Mammary epithelial cell (primary cell): ENCODE measurements at regions of chr2 and their contacts with region 1.

Region 1: GRCh38 chr2:72325592-72326422 is 178.1 kb upstream of the CYP26B1 start:
- DNase-seq: no peak
- H3K4me3 ChIP-seq: no peak overlapping the region
- H3K27ac ChIP-seq: no peak overlapping the region
- H3K4me1 ChIP-seq: no peaks in the 10 kb centered on the region
- H3K27me3 ChIP-seq: no peaks in the 10 kb centered on the region
- CTCF ChIP-seq: peak; percentile 75 to 80

Region 2: GRCh38 chr2:72041638-72042111 is 284.1 kb before region 1 on chr2:
- CTCF ChIA-PET with region 1: no interaction called
- dilution Hi-C with region 1: no loop called
- in situ Hi-C with region 1: no loop called
- intact Hi-C with region 1: no loop called
- DNase-seq: peak; percentile 86
- H3K4me3 ChIP-seq: no peak overlapping the region
- H3K27ac ChIP-seq: peak overlapping the region; percentile 47
- H3K4me1 ChIP-seq: peaks cover 32% of the 10 kb centered on the region
- H3K27me3 ChIP-seq: no peaks in the 10 kb centered on the region
- CTCF ChIP-seq: no peak

Region 3: DNA sequence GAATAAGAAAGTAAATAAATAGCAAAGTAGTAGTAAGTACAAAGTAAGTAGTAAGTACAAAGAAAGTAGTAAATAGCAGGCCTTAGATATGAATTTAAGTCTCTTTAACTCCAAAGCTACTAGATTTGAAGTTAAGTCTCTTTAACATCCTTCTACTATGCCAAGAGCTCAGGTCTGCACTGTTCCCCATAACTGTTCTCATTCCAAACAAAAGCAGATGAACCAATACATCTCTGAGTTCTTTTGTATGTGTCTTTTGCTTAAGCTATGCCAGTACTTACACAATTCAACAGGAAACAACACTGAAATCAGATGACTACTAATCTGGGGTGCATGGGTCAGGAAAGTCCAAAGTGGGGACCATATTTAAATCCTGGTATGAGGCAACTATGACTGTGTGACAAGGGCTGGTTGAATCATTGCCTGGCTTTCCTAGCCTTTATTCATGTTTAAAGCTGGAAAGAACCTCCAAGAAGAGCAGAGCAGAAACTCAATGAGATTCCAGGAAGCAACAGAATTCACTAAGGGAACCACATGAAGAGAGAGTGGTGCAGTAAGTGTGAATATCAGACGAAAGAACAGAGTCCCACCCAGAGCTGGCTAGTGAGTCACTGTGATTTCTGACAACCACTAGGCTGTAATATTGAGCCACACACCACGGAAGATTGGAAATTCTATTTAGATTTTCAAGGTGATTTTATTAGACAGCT is 127.1 kb before region 1 on chr2:
- CTCF ChIA-PET with region 1: no interaction called
- dilution Hi-C with region 1: no loop called
- in situ Hi-C with region 1: no loop called
- intact Hi-C with region 1: loop called (anchors 10 kb)
- DNase-seq: peak; percentile 79
- H3K4me3 ChIP-seq: no peak overlapping the region
- H3K27ac ChIP-seq: no peak overlapping the region
- H3K4me1 ChIP-seq: peaks cover 11% of the 10 kb centered on the region
- H3K27me3 ChIP-seq: no peaks in the 10 kb centered on the region
- CTCF ChIP-seq: peak; percentile 18 to 45

Region 4: DNA sequence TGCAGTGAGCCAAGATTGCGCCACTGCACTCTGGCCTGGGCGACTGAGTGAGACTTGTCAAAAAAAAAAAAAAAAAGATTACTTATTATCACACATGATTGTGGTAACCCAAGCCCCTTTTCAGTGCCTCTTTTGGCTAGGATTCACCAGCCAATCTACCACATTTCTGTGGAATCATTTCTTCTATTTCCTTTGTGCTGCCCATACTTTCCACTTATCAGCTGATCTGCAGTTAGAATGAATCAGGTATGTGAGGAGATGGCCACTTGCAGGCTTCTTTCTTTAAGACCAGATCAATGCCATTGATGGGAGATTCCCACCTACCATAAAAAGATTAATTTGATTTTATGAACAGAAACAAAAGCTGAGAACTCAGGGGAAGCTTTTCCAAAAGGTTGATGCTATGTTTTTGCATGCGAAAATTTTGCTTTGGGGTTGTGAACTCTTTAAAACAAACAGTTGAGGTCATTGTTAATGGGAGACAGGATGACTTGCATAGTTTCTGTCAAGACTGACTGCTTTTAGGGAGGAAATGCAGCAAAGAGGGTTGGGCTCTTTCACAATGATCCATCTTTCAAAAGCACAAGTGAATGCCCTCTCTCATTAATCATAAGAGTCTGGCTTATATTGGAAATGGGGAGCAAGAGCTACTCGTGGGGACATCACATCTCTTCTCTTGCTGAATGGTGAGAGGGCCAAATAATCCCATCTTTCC is 111.2 kb before region 1 on chr2:
- CTCF ChIA-PET with region 1: no interaction called
- dilution Hi-C with region 1: no loop called
- in situ Hi-C with region 1: no loop called
- intact Hi-C with region 1: loop called (anchors 5 kb)
- DNase-seq: peak; percentile 48
- H3K4me3 ChIP-seq: no peak overlapping the region
- H3K27ac ChIP-seq: no peak overlapping the region
- H3K4me1 ChIP-seq: peaks cover 6% of the 10 kb centered on the region
- H3K27me3 ChIP-seq: no peaks in the 10 kb centered on the region
- CTCF ChIP-seq: no peak

Region 5: GRCh38 chr2:72367530-72368225 is 41.9 kb after region 1 on chr2:
- CTCF ChIA-PET with region 1: no interaction called
- dilution Hi-C with region 1: no loop called
- in situ Hi-C with region 1: no loop called
- intact Hi-C with region 1: loop called (anchors 1 kb)
- DNase-seq: peak; percentile 98
- H3K4me3 ChIP-seq: no peak overlapping the region
- H3K27ac ChIP-seq: no peak overlapping the region
- H3K4me1 ChIP-seq: peaks cover 6% of the 10 kb centered on the region
- H3K27me3 ChIP-seq: no peaks in the 10 kb centered on the region
- CTCF ChIP-seq: peak; percentile 64 to 84

Region 6: DNA sequence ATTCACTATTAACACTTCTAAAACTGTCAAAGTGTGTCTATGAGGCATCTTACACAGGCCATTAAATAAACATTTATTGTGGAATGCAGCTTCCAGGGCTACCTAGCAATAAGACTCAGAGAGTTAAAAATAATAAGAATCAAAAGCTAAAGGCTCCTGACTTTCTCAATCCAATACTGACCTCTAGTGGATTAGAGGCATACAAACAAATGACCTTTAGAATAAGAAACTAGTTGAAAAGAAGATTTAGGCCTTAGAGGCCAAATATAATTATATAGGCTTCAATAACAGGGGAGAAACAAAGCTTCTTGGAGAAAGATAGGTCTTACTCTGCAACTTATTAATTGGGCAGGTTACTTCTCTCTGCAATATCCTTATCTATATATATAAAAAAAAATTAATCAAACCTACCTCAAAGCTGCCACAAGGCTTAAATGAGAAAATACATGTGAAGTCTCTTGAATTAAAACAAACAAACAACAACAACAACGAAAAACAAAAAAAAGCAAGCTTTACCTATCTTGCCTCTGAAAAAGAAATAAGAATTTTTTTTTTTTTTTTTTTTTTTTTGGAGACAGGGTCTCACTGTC is 253.9 kb after region 1 on chr2:
- CTCF ChIA-PET with region 1: no interaction called
- dilution Hi-C with region 1: no loop called
- in situ Hi-C with region 1: no loop called
- intact Hi-C with region 1: loop called (anchors 10 kb)
- DNase-seq: peak; percentile 28
- H3K4me3 ChIP-seq: no peak overlapping the region
- H3K27ac ChIP-seq: no peak overlapping the region
- H3K4me1 ChIP-seq: no peaks in the 10 kb centered on the region
- H3K27me3 ChIP-seq: no peaks in the 10 kb centered on the region
- CTCF ChIP-seq: peak; percentile 52 to 60

Region 7: GRCh38 chr2:72745679-72746368 is 420.0 kb after region 1 on chr2:
- CTCF ChIA-PET with region 1: no interaction called
- dilution Hi-C with region 1: no loop called
- in situ Hi-C with region 1: no loop called
- intact Hi-C with region 1: loop called (anchors 1 kb)
- DNase-seq: peak; percentile 46
- H3K4me3 ChIP-seq: no peak overlapping the region
- H3K27ac ChIP-seq: no peak overlapping the region
- H3K4me1 ChIP-seq: peaks cover 6% of the 10 kb centered on the region
- H3K27me3 ChIP-seq: no peaks in the 10 kb centered on the region
- CTCF ChIP-seq: peak; percentile 68 to 76